IMR-90 (cell line): ENCODE measurements at regions of chr10 and their contacts with region 1.

Region 1: GRCh38 chr10:44310762-44311562 is 73.9 kb downstream of the CXCL12 start:
- DNase-seq: peak; percentile 79
- ATAC-seq: peak; percentile 100
- H3K4me3 ChIP-seq: no peak overlapping the region
- H3K27ac ChIP-seq: no peak overlapping the region
- H3K4me1 ChIP-seq: peaks cover 6% of the 10 kb centered on the region
- H3K27me3 ChIP-seq: peaks cover 1% of the 10 kb centered on the region
- CTCF ChIP-seq: peak; percentile 98
- POLR2A ChIP-seq: no peak
- RAD21 ChIP-seq: peak; percentile 88

Region 2: DNA sequence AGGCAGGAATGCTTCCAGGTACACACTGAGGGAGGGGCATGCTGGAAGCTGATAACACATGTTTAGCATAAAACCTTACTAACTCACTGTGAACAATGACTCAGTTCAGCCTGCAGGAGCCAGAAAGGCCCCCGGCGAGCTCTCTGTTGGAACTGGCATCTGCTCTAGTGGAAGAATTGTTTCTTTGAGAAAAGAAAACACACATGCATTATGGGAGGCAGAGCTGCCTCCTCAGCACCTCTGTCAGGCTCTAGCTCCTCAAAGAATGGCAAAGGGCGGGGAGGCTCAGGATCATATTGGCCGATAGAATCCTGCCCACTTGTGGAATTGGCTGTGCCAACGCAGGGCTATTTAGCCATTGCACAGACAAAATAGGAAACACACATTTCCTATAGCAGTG is 264.4 kb before region 1 on chr10:
- CTCF ChIA-PET with region 1: no interaction called
- POLR2A ChIA-PET with region 1: no interaction called
- dilution Hi-C with region 1: no loop called
- in situ Hi-C with region 1: no loop called
- intact Hi-C with region 1: no loop called
- DNase-seq: peak; percentile 52
- ATAC-seq: peak; percentile 70
- H3K4me3 ChIP-seq: no peak overlapping the region
- H3K27ac ChIP-seq: no peak overlapping the region
- H3K4me1 ChIP-seq: peaks cover 7% of the 10 kb centered on the region
- H3K27me3 ChIP-seq: peaks cover 14% of the 10 kb centered on the region; the same call in 1 of the 2 replicates
- CTCF ChIP-seq: no peak
- POLR2A ChIP-seq: no peak
- RAD21 ChIP-seq: no peak

Region 3: DNA sequence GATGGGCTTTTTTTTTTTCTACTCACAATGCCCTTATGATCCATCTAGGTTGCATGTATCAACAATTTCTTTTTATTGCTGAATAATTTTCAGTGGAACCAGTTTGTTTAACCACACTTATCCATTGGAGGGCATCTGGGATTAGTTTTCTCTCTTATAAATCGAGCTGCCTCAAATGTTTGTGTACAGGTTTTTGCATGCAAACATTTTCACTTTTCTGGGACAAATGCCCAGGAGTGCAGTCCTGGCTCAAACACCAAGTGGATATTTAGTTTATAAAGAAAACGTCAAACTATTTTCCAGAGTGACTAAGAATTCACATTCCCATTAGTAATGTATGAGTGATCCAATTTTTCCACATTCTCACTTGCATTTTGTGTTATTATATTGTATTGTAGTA is 239.5 kb before region 1 on chr10:
- CTCF ChIA-PET with region 1: no interaction called
- POLR2A ChIA-PET with region 1: no interaction called
- dilution Hi-C with region 1: no loop called
- in situ Hi-C with region 1: no loop called
- intact Hi-C with region 1: loop called (anchors 1 kb)
- DNase-seq: peak; percentile 90
- ATAC-seq: peak; percentile 84
- H3K4me3 ChIP-seq: no peak overlapping the region
- H3K27ac ChIP-seq: no peak overlapping the region
- H3K4me1 ChIP-seq: no peaks in the 10 kb centered on the region; the same call in 1 of the 2 replicates
- H3K27me3 ChIP-seq: peaks cover 4% of the 10 kb centered on the region; the same call in 1 of the 2 replicates
- CTCF ChIP-seq: no peak; the same call in 1 of the 2 replicates
- POLR2A ChIP-seq: no peak
- RAD21 ChIP-seq: no peak

Region 4: GRCh38 chr10:44153918-44154670 is 156.9 kb before region 1 on chr10:
- CTCF ChIA-PET with region 1: no interaction called
- POLR2A ChIA-PET with region 1: no interaction called
- dilution Hi-C with region 1: no loop called
- in situ Hi-C with region 1: no loop called
- intact Hi-C with region 1: no loop called
- DNase-seq: no peak
- ATAC-seq: no peak
- H3K4me3 ChIP-seq: no peak overlapping the region
- H3K27ac ChIP-seq: no peak overlapping the region
- H3K4me1 ChIP-seq: no peaks in the 10 kb centered on the region
- H3K27me3 ChIP-seq: no peaks in the 10 kb centered on the region
- CTCF ChIP-seq: no peak
- POLR2A ChIP-seq: no peak
- RAD21 ChIP-seq: no peak

Region 5: DNA sequence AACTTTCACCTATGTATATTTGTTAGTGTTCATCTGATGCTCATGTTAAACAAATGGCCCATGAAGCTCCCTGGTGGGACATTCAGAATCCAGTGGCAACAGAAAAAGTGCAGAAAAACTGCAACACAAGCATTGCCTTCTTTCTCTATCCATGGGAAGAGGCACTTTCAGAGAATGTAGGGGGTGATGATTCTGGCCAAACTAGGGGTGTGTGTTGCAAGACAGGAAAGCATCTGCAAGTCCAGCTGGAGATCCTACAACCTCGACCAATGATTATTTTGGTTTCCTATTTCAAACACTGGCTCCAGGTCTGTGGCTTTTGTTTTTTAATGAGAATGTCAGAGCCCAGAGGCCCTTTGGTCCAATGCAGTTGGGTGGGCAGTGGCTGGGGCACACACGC is 124.8 kb before region 1 on chr10:
- CTCF ChIA-PET with region 1: no interaction called
- POLR2A ChIA-PET with region 1: no interaction called
- dilution Hi-C with region 1: no loop called
- in situ Hi-C with region 1: no loop called
- intact Hi-C with region 1: loop called (anchors 5 kb)
- DNase-seq: peak; percentile 83
- ATAC-seq: peak; percentile 62; the same call in 1 of the 2 replicates
- H3K4me3 ChIP-seq: no peak overlapping the region
- H3K27ac ChIP-seq: no peak overlapping the region
- H3K4me1 ChIP-seq: peaks cover 4% of the 10 kb centered on the region; the same call in 1 of the 2 replicates
- H3K27me3 ChIP-seq: no peaks in the 10 kb centered on the region; the same call in 1 of the 2 replicates
- CTCF ChIP-seq: no peak
- POLR2A ChIP-seq: no peak
- RAD21 ChIP-seq: no peak